Ascending aorta (tissue), 2 donors: ENCODE measurements at regions of chr19 and their contacts with region 1.

Region 1: DNA sequence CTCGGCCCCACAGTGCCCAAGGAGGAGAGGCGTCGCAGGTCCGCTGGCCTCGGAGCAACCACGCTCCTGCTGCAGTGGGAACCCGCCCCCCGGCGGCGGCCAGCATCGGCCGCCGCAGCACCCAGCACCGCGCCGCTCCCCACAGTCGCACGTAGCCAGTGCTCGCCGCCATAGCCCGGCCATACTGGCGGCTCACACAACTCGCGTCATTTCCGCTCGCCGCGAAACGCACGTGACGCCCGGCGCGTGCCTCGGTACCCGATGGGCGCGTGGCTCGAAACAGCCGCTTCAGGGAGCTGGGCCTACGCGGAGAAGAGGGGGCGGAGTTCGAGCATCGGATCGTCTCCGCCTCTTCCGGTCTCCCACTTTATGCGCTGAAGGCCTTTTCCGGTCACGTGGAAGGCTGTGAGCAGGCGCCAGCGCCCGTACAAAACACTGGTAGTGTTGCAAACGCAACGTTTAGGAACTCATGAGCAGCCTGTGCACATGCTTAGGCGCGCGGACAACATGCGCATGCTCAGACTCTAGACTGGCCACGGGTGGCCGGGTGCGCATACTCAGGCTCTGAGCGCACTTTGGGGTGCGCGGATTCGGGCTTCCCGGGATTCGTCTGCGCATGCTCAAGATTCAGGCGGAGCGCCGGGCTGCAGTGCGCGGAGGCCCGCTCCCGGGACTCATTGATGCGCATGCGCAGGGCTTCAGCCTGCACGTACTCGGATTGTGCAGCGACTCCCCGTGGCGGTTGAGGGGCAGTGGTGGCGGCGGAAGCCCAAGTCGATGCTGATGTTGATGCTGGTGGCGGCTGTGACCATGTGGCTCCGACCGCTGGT is at the starts of genes CATSPERD and LONP1:
- DNase-seq: peak; percentile 89 to 99
- H3K4me3 ChIP-seq: peak within 1 kb of the TSS; percentile 68 to 99
- H3K27ac ChIP-seq: peak within 1 kb of the TSS; percentile 91 to 98
- H3K4me1 ChIP-seq: peaks cover 5 to 13% of the 10 kb centered on the region in 2 donors
- H3K27me3 ChIP-seq: no peaks in the 10 kb centered on the region
- CTCF ChIP-seq: peak; percentile 90 to 94 (median 93)
- total RNA-seq, gene CATSPERD: not detected
- total RNA-seq, gene LONP1: 60.0 TPM

Region 2: GRCh38 chr19:5665796-5666513 is 54.2 kb before region 1 on chr19:
- intact Hi-C with region 1: no loop called
- DNase-seq: no peak
- H3K4me3 ChIP-seq: no peak overlapping the region
- H3K27ac ChIP-seq: peak overlapping the region in 1 of 2 donors; percentile 14
- H3K4me1 ChIP-seq: no peaks in the 10 kb centered on the region
- H3K27me3 ChIP-seq: no peaks in the 10 kb centered on the region
- CTCF ChIP-seq: peak in 1 of 3 experiments; percentile 15

Region 3: DNA sequence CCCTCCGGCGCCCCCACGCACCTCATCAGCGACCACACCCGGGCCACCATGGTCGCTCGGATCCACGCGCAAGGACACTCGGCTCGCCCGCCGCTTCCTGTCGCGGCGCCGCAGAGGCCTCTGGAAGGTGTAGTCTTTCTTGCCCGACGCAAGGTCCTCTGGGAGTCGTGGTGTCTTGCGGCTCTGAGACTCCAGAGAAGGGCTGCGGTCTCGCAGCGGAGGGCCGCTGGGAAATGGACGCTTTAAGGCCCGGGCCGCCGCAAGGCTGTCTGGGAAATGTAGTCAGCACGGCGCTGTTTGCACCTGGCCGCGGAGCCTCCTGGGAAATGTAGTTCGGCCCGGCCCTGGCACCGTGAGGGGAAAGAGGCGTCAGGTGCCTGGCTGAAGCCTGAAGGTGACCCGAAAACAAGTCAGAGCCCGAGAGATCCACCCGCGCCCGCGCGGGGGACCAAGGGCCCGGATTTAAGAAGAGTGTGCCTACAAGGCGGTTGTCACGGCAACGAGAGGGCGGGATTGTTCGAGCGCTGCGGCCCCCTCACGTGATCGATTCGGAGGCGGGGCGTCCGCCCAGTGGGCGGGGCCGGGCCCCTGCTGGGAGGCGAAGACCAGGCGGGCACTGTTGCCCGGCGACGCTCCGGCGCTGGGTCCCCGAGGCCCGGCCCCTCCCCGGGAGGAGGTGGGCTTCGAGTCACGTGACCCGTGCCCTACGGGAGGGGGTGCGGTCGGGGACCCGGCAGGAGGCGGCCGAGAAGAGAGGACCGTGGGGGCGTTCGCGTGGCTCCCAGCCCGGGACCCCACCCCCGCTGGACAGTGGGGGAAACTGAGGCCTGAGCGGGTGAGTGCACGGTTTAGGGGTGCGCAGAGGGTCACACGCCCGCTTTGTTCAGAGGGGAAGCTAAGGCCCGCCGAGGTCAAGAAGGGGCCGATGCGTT is 39.5 kb before region 1 on chr19 and contains the starts of genes HSD11B1L and MICOS13:
- intact Hi-C with region 1: loop called (anchors 1 kb)
- DNase-seq: peak; percentile 97 to 99
- H3K4me3 ChIP-seq: peak within 1 kb of the TSS; percentile 77 to 96
- H3K27ac ChIP-seq: peak within 1 kb of the TSS; percentile 80 to 95
- H3K4me1 ChIP-seq: peaks cover 6 to 9% of the 10 kb centered on the region in 2 donors
- H3K27me3 ChIP-seq: no peaks in the 10 kb centered on the region
- CTCF ChIP-seq: no peak
- total RNA-seq, gene HSD11B1L: 116 TPM
- total RNA-seq, gene MICOS13: 75.6 TPM

Region 4: GRCh38 chr19:5690125-5690954 is 29.8 kb before region 1 on chr19 and contains the start of gene RPL36:
- intact Hi-C with region 1: loop called (anchors 1 kb)
- DNase-seq: peak; percentile 84 to 99
- H3K4me3 ChIP-seq: peak within 1 kb of the TSS; percentile 65 to 70
- H3K27ac ChIP-seq: peak within 1 kb of the TSS; percentile 85 to 88
- H3K4me1 ChIP-seq: peaks cover 5 to 13% of the 10 kb centered on the region in 2 donors
- H3K27me3 ChIP-seq: no peaks in the 10 kb centered on the region
- CTCF ChIP-seq: peak; percentile 94 to 98 (median 95)
- total RNA-seq, gene RPL36: 885 TPM

Region 5: DNA sequence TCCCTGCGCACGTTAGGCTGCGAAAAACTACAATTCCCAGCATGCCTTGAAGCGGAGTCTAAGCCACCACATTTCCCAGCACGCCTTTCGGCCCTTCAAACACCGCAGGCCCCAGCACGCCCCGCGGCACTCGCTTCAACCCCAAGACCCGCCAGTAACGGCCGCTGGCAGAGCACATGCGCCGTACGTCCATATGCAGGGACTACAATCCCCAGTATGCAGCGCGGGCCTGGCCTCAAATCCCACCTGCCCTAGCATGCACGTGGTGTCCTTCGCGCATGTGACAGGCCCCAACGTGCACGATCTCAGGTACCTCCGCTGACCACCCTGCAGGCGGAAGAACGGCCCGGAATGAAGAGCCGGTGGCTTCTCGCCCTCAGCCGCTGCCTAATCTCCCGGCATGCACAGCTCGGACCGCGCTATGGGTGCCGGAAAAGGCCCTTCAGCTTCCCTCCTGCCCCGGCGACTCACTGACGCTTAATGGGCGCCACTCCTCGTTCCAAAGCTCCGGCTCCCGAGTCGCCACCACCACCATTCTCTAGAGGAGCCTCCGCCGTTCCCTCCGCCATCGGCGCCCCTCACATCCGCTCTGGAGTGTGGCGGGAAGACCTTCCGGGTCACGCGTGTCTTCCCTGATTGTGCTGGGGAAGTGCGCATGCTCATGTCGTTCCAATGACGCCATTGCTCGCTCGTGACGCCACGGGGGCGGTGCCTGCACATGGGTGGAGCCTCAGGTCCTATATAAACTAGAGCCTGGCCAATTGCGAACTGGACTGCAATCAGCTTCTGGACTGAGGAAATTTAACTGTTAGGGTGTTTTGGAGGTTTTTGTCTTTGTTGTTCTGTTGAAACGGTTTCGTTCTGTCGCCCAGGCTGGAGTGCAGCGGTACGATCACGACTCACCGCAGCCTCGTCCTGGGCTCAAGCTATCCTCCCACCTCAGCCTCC is 70.7 kb after region 1 on chr19 and contains the start of gene DUS3L:
- intact Hi-C with region 1: loop called (anchors 2 kb)
- DNase-seq: peak; percentile 89 to 99
- H3K4me3 ChIP-seq: peak within 1 kb of the TSS; percentile 63 to 77
- H3K27ac ChIP-seq: peak within 1 kb of the TSS; percentile 86 to 97
- H3K4me1 ChIP-seq: peaks cover 3 to 5% of the 10 kb centered on the region in 2 donors
- H3K27me3 ChIP-seq: no peaks in the 10 kb centered on the region
- CTCF ChIP-seq: no peak
- total RNA-seq, gene DUS3L: 13.1 TPM